CD4-positive, alpha-beta T cell (primary cell): ENCODE measurements at regions of chr1 and their contacts with region 1.

Region 1: GRCh38 chr1:244047621-244048471 is 3.2 kb upstream of the ZBTB18 start:
- DNase-seq: peak in 13 of 14 experiments; percentile 94 to 99 (median 97)
- ATAC-seq: peak; percentile 71
- H3K4me3 ChIP-seq: peak overlapping the region; percentile 96
- H3K4me3 Mint-ChIP-seq: peak overlapping the region; percentile 91
- H3K27ac ChIP-seq: peak overlapping the region; percentile 96 to 98
- H3K27ac Mint-ChIP-seq: peak overlapping the region; percentile 98
- H3K4me1 ChIP-seq: peaks cover 17% of the 10 kb centered on the region
- H3K4me1 Mint-ChIP-seq: peaks cover 29% of the 10 kb centered on the region
- H3K27me3 ChIP-seq: no peaks in the 10 kb centered on the region
- H3K27me3 Mint-ChIP-seq: no peaks in the 10 kb centered on the region
- CTCF ChIP-seq: no peak

Region 2: DNA sequence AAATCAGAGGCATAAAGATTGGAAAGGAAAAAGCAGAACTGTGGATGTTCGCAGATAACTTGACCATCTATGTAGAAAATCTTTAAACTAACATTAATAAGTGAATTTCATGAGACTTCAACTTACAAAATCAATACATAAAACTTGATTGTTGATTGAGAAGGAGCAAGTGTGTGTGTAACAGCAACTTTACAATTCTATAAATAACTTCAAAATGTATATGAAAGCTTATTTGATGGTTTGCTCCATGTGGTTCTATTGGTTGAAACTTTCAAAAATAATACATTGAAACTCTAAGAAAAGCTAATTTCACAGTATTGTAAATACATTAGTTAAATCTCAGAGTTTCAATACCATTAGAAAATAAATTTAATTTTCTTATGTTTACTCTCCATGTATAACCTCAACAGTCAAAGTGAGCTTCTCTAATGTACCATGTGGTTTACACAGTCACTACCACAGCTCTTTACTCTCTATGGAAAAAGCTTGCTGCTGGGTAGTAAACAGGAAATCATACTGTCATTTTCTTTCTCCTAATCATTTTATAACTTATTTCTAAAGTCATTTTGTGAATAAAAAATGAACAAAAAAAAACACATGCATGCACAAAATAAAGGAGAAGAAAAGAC is 209.8 kb before region 1 on chr1:
- CTCF ChIA-PET with region 1: no interaction called
- POLR2A ChIA-PET with region 1: interaction called, 21 read pairs
- intact Hi-C with region 1: no loop called
- DNase-seq: peak in 3 of 14 experiments; percentile 54 to 81 (median 58)
- ATAC-seq: peak; percentile 94
- H3K4me3 ChIP-seq: no peak overlapping the region
- H3K4me3 Mint-ChIP-seq: peak overlapping the region; percentile 54
- H3K27ac ChIP-seq: peak overlapping the region; percentile 35 to 47
- H3K27ac Mint-ChIP-seq: peak overlapping the region; percentile 91
- H3K4me1 ChIP-seq: peaks cover 2% of the 10 kb centered on the region
- H3K4me1 Mint-ChIP-seq: peaks cover 77% of the 10 kb centered on the region
- H3K27me3 ChIP-seq: no peaks in the 10 kb centered on the region
- H3K27me3 Mint-ChIP-seq: no peaks in the 10 kb centered on the region
- CTCF ChIP-seq: no peak

Region 3: GRCh38 chr1:244065960-244066388 is 18.1 kb after region 1 on chr1:
- CTCF ChIA-PET with region 1: no interaction called
- POLR2A ChIA-PET with region 1: interaction called, 14 read pairs
- intact Hi-C with region 1: loop called in 1 of 2 experiments (anchors 1 kb)
- DNase-seq: no peak
- ATAC-seq: no peak
- H3K4me3 ChIP-seq: no peak overlapping the region
- H3K4me3 Mint-ChIP-seq: no peak overlapping the region
- H3K27ac ChIP-seq: no peak overlapping the region
- H3K27ac Mint-ChIP-seq: no peak overlapping the region
- H3K4me1 ChIP-seq: no peaks in the 10 kb centered on the region
- H3K4me1 Mint-ChIP-seq: peaks cover 5% of the 10 kb centered on the region
- H3K27me3 ChIP-seq: no peaks in the 10 kb centered on the region
- H3K27me3 Mint-ChIP-seq: no peaks in the 10 kb centered on the region
- CTCF ChIP-seq: no peak

Region 4: DNA sequence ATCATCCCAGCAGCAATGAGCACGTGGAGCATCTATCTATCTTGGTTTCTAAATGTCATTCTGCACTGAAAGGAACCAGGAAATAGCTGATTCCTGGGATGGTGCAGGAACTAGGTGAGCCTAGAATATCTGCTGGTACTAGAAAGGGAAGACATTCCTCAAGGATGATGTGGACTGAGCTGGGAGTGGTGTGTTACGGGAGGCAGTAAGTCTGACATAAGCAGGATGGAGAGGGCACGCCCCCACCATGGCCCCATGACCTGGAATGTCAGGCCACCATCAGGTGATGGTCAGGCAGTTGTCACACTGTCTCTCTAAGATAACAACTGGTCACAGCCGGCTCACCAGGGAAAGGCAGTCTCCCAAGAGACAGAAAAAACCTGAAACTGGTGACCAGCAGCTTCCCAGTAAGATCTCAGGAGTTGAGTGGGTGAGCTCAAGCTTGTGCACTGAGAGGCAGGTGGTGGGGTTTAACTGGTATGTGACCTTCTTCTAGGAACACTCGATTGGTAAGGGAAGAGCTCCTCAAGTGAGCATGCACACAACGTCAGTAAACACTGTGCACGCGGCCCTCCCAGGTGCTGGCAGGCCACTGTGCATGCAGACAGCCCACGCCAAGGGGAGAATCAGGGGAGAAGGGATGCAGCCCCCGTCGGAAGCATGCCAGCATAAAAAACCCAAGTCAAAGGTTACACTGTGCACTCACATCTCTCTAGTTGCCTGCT is 255.2 kb after region 1 on chr1:
- CTCF ChIA-PET with region 1: interaction called, 4 read pairs
- POLR2A ChIA-PET with region 1: interaction called, 17 read pairs
- intact Hi-C with region 1: no loop called
- DNase-seq: no peak
- ATAC-seq: no peak
- H3K4me3 ChIP-seq: no peak overlapping the region
- H3K4me3 Mint-ChIP-seq: no peak overlapping the region
- H3K27ac ChIP-seq: no peak overlapping the region
- H3K27ac Mint-ChIP-seq: no peak overlapping the region
- H3K4me1 ChIP-seq: peaks cover 14% of the 10 kb centered on the region
- H3K4me1 Mint-ChIP-seq: peaks cover 8% of the 10 kb centered on the region
- H3K27me3 ChIP-seq: no peaks in the 10 kb centered on the region
- H3K27me3 Mint-ChIP-seq: no peaks in the 10 kb centered on the region
- CTCF ChIP-seq: no peak

Region 5: DNA sequence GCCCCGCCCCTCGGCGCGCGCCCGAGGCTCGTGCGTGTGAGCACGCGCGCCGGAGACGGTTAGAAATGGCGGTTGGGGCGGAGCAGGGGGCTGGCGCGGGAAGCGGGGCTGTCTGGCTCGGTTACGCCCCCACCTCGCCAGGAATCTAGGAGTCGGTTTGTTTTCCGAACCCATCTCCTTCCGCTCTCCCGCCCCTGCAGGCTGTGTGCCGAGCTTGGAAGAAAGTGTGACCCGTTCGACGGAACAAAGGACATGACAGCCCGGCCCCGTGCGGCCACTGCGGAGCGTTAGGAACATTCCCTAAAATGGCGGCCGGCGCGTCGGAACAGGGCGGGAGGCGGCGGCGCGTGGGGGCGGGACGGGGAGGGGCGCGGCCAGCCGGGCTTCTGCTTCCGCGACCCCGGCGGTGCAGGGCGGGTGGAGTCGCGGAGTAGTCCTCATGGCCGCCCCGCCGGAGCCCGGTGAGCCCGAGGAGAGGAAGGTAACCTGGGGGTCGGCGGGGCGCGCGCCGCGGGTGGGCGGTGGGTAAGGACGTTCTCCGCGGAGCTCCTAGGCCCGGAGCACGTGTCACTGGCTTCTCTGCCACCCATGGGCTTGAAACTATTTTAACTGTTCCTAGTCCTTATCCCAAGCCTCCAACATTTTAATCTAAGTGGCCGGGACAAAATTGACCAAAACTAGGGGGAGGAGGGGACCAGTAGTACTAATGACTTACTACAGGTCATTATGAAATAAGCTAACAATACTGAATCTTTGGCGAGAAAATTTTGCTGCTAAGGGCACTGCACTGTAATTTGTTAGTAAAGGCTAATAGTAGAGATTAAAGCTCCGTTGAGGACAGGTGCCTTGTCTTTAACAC is 787.7 kb after region 1 on chr1 and contains the start of gene COX20:
- CTCF ChIA-PET with region 1: no interaction called
- POLR2A ChIA-PET with region 1: interaction called, 11 read pairs
- intact Hi-C with region 1: no loop called
- DNase-seq: peak; percentile 79 to 95 (median 87)
- ATAC-seq: peak; percentile 55
- H3K4me3 ChIP-seq: peak within 1 kb of the TSS; percentile 87
- H3K4me3 Mint-ChIP-seq: peak within 1 kb of the TSS; percentile 98
- H3K27ac ChIP-seq: peak within 1 kb of the TSS; percentile 97 to 98
- H3K27ac Mint-ChIP-seq: peak within 1 kb of the TSS; percentile 99
- H3K4me1 ChIP-seq: peaks cover 18% of the 10 kb centered on the region
- H3K4me1 Mint-ChIP-seq: peaks cover 53% of the 10 kb centered on the region
- H3K27me3 ChIP-seq: no peaks in the 10 kb centered on the region
- H3K27me3 Mint-ChIP-seq: no peaks in the 10 kb centered on the region
- CTCF ChIP-seq: no peak
- total RNA-seq, gene COX20: 14.5 to 16.8 TPM